ENCODE measurements at regions of chr17 and their contacts with region 1.

Region 1: DNA sequence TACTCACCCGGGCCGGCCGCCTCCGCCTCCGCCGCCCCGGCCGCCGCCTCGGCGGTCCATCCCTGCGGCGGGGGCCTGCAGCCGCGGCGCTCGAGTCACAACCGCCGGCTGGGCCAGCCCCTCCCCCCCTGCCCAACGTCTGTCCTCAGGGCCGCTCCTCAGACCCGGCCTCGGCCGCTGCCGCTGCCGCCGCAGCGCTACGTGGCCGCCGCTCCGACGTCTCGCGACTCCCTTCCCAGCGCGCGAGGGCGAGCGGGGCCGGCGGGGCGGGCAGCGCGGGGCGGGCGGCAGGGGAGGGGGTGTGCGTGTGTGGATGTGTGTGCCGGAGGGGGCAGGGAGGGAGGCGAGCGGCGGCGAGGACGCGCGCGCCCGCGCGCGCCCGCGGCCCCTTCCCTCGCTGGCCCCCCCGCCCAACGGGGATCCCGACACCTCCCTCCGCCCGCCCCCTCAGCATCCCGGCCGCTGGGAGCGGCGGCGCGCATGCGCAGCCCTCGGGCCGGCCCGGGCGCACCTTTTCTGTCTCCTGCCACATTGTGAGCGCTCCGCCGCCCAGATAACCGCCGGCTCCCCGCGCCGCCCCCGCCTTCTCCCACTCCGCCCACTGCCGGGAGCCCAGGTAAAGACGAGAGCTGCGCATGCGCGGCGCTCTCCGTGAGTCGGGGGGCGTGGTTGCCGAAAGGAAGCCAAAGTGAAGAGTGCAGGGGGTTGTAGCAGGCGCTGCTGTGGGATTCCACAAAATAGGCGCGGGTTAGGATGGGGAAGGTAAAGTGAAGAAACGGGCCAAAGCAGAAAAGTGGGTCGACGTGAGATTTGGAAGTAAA is at the start of gene ZNF652:
- DNase-seq: peak; percentile 91 to 99 (median 96)
- ATAC-seq: peak; percentile 63 to 65
- H3K4me3 Mint-ChIP-seq: peak within 1 kb of the TSS; percentile 91 to 99 (median 96)
- H3K27ac Mint-ChIP-seq: peak within 1 kb of the TSS; percentile 93 to 99 (median 98)
- H3K4me1 Mint-ChIP-seq: peaks cover 29 to 66% (median 58%) of the 10 kb centered on the region in 4 donors
- H3K27me3 Mint-ChIP-seq: peaks cover 0 to 3% (median 0%) of the 10 kb centered on the region in 5 donors
- polyA plus RNA-seq, gene ZNF652: 19.9 to 20.8 (median 20.1) TPM

Region 2: DNA sequence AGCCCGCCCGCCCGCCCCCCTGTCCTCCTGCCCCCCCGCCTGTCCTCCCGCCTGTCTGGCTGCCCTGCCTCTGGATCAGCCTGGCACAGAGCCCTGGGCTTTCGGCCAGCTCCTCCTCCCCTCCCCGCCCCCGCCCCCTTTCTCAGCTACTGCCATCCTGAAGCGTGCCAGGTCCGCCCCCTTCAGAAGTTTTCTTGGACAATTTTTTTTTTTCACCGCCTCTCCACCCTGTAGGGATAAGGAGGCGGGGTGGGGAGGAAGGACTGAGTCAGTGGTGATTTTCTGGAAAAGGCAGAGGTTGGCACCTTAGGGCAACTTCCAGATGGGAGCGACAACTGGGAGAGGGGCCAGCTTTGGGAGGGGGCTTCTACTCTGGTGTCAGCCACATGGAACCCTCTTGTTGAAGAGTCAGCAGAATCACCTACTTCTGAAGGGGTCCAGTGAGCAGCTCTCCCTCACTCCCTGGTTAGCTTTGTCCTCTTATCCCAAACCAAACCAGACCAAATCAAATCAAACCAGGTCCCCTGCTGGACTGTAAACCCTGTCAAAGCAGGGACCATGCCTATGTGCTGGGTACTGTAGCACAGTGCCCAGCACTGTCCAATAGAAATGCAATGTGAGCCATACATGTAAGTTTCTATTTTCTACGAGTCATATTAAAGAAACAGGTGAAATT is 345.2 kb before region 1 on chr17:
- POLR2A ChIA-PET with region 1: no interaction called
- DNase-seq: no peak
- ATAC-seq: no peak
- H3K4me3 Mint-ChIP-seq: no peak overlapping the region
- H3K27ac Mint-ChIP-seq: peak overlapping the region in 1 of 10 donors; percentile 26
- H3K4me1 Mint-ChIP-seq: peaks cover 0 to 4% (median 3%) of the 10 kb centered on the region in 4 donors
- H3K27me3 Mint-ChIP-seq: peaks cover 32 to 65% (median 48%) of the 10 kb centered on the region in 5 donors

Region 3: DNA sequence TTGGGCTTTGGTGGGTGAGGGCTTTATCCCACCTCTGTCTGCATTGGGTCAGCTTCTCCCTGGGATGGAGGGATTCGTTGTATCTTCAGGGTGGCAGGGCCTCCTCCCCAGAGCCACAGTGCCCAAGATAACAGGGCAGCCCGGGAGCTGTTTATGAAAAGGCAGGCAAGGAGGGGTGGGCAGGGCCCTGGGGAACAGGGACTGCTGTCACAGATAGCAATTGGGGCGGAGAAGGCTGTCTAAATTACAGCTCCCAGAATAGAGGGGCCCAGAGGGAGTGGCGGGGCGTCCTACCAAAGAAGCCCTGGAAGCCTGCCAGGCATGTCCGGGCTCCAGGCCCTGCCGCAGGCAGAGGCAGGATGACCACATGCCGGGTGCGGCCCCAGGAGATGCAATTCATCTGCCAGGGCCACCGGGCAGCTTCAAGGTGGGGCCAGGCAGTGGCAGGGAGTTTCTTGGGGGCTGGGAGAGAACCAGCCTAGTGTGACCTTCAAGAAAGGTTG is 112.8 kb before region 1 on chr17:
- POLR2A ChIA-PET with region 1: no interaction called
- DNase-seq: no peak
- ATAC-seq: no peak
- H3K4me3 Mint-ChIP-seq: no peak overlapping the region
- H3K27ac Mint-ChIP-seq: no peak overlapping the region
- H3K4me1 Mint-ChIP-seq: no peaks in the 10 kb centered on the region
- H3K27me3 Mint-ChIP-seq: peaks cover 0 to 9% (median 0%) of the 10 kb centered on the region in 5 donors

Region 4: GRCh38 chr17:49343273-49343672 is 18.8 kb before region 1 on chr17:
- POLR2A ChIA-PET with region 1: interaction called, 34 read pairs
- DNase-seq: peak in 2 of 10 donors; percentile 22 to 28
- ATAC-seq: peak; percentile 49 to 52
- H3K4me3 Mint-ChIP-seq: peak overlapping the region; percentile 64 to 86 (median 73)
- H3K27ac Mint-ChIP-seq: peak overlapping the region in 9 of 10 donors; percentile 2 to 90 (median 77)
- H3K4me1 Mint-ChIP-seq: peaks cover 24 to 79% (median 64%) of the 10 kb centered on the region in 4 donors
- H3K27me3 Mint-ChIP-seq: no peaks in the 10 kb centered on the region

Region 5: DNA sequence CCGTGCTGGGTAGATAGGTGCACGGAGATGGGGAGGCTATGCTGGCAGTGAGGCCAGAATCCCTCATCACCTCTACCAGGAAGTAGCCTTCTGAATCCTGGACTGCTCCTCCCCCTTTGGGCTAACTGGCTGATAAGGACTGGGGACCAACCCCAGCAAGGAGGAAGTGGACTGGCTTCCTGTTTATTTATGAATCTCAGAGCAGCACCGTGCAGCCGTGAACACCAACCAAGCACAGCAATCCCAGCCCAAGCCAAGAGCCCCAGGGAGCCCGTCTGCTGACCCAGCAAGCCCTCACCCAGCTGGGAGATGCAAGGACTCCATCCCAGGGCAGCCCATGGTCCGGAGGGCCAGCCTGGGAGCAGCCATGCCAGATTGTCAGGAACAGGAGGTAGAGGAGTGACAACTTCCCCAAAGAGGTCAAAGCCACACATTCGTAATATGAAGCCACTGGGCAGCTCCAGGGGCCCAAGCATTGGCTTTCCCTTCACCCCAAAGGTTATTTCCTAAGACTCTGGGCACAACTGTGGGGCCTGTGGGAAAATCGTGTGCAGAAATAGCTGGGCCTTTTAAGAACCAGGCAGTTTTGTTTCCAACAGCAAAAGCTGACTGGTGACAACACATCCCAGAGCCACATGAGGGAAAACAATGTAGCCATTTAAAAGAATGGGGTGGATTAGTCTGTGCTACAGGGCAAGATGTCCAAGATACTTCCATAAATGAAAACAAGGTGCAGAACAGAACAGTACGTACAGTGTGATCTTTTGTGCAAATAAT is 28.6 kb after region 1 on chr17:
- POLR2A ChIA-PET with region 1: interaction called, 42 read pairs
- DNase-seq: peak in 1 of 10 donors; percentile 22
- ATAC-seq: no peak
- H3K4me3 Mint-ChIP-seq: peak overlapping the region; percentile 19 to 86 (median 70)
- H3K27ac Mint-ChIP-seq: peak overlapping the region; percentile 47 to 94 (median 86)
- H3K4me1 Mint-ChIP-seq: peaks cover 39 to 77% (median 65%) of the 10 kb centered on the region in 4 donors
- H3K27me3 Mint-ChIP-seq: no peaks in the 10 kb centered on the region